ENCODE measurements at regions of chr9 and their contacts with region 1.

Region 1: DNA sequence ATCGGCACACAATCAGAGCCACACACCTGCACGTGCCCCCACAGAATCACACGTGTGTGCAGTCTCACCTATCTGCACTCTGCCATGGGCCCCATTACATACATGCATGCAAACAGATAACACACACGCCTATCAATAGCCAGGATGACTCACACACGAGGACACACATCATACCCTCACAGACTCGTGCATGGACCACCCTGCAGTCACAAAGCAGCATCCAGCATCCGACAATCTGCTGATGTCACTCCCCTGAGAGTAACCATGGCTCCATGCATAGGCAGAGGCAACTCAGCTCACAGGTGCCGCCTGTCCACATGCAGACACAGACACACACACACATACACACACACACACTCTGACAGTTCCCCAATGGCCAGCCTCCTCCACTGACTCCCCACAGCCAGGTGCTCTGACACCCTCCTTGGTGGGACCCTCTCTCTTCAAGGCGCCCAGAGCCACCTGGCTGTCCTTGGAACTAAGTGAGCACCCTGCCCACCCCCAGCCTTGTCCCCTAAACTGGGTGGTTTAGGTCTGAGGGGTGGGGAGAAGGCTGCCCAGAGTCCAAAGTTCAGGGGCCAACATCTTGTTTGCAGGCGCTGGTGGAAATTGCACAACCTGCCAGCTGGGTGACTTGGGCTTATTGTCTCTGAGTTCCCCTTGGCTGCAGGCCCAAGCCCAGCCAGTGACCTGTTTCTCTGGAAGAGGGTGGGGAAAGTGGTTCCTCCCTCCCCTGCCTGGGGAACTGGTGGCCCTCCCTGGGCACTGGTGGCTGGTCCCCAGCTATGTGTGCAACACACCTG is 34.6 kb upstream of the NEK6 start:
- DNase-seq: no peak
- H3K4me3 ChIP-seq: no peak overlapping the region
- H3K27ac ChIP-seq: no peak overlapping the region
- H3K4me1 ChIP-seq: no peaks in the 10 kb centered on the region
- H3K27me3 ChIP-seq: no peaks in the 10 kb centered on the region
- CTCF ChIP-seq: no peak

Region 2: GRCh38 chr9:124188331-124189110 is 34.6 kb before region 1 on chr9:
- CTCF ChIA-PET with region 1: no interaction called
- dilution Hi-C with region 1: loop called (anchors 5 kb)
- in situ Hi-C with region 1: no loop called
- intact Hi-C with region 1: no loop called
- DNase-seq: no peak
- H3K4me3 ChIP-seq: no peak overlapping the region
- H3K27ac ChIP-seq: no peak overlapping the region
- H3K4me1 ChIP-seq: no peaks in the 10 kb centered on the region
- H3K27me3 ChIP-seq: peaks cover 3% of the 10 kb centered on the region
- CTCF ChIP-seq: no peak

Region 3: GRCh38 chr9:124320062-124320973 is 97.2 kb after region 1 on chr9:
- CTCF ChIA-PET with region 1: no interaction called
- dilution Hi-C with region 1: loop called (anchors 5 kb)
- in situ Hi-C with region 1: no loop called
- intact Hi-C with region 1: no loop called
- DNase-seq: peak; percentile 30
- H3K4me3 ChIP-seq: no peak overlapping the region
- H3K27ac ChIP-seq: no peak overlapping the region
- H3K4me1 ChIP-seq: no peaks in the 10 kb centered on the region
- H3K27me3 ChIP-seq: no peaks in the 10 kb centered on the region
- CTCF ChIP-seq: peak; percentile 95 to 97

Region 4: DNA sequence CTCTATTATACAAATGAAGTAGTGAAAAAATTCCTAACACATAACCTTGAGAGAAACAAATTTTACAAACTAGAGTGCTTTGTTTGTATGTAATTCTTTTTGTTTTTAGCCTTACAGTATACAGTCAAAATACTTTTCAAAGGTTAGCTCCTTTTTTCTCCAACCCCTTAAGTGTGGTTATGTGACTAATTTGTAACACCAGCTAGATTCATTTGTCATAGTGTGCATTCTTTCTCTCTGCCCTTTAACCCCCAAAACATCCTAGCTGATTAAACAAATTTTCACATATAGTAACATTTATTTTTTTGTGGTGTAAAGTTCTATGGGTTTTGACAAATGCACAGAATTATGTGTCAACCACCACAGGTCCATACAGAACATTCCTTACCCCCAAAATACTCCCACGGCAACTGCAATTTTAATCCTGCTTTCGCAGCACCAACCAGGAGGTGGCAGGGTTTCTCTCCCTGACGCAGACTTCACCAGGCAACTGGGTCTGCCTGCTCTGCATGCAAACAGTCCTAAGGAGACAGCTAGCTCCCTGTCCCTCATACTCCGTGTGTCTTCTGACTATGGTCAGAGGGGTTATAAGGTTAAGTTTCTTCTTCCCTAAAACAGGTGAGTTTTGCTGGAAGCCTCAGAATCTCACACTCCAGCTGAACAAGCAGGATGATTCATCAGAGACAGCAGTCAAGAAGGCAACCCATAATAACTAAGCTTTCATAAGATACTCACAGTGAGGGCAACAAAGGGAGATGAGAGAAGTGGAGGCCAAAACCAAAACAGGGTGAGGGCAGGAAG is 328.6 kb after region 1 on chr9:
- CTCF ChIA-PET with region 1: no interaction called
- dilution Hi-C with region 1: no loop called
- in situ Hi-C with region 1: no loop called
- intact Hi-C with region 1: no loop called
- DNase-seq: peak; percentile 76
- H3K4me3 ChIP-seq: no peak overlapping the region
- H3K27ac ChIP-seq: no peak overlapping the region
- H3K4me1 ChIP-seq: peaks cover 11% of the 10 kb centered on the region
- H3K27me3 ChIP-seq: no peaks in the 10 kb centered on the region
- CTCF ChIP-seq: peak; percentile 76 to 85

Measured in mammary epithelial cell (primary cell).